PC-9 (cell line): ENCODE measurements at regions of chr11 and their contacts with region 1.

Region 1: DNA sequence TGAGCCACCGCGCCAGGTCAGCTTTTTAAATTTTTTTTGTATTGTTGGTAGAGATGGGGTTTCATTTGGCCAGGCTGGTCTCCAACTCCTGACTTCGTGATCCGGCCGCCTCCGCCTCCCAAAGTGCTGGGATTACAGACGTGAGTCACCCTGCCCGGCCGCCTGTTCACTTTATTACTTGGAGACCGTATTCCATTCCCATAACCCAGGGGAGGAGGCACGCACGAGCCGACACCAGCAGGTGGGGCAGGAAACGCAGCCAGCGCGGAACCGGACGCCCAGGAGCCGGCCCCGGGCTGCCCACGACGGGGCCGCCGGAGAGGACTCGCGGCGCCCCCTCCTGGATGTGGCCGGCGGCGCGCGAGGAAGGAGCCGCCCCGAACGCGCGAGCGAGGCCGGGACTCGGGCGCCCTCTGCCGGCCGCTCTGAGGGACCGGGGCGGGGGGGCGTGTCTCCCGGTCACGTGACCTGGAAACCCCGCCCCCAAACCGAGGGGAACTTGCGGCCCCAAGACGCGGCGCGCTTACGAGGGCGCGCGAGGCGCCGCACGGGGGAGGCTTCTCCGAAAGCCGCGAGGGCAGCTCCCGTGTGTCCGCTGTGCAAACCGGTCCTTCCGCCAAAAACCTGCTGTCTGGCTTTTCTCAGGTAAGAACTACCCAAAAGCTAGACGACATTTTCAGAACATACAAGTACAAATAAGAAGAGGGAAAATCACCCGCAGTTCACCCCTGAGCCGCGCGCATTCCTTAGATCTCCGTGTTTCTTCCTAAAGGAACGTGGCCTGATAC is 11.6 kb upstream of the RNH1 start:
- DNase-seq: peak; percentile 88 to 92
- H3K4me3 ChIP-seq: peak overlapping the region; percentile 32; the same call in 1 of the 2 replicates
- H3K27ac ChIP-seq: peak overlapping the region; percentile 71
- H3K4me1 ChIP-seq: no peaks in the 10 kb centered on the region
- H3K27me3 ChIP-seq: no peaks in the 10 kb centered on the region
- CTCF ChIP-seq: peak; percentile 73

Region 2: GRCh38 chr11:394034-394857 is 124.4 kb before region 1 on chr11 and contains the start of gene PKP3:
- CTCF ChIA-PET with region 1: no interaction called
- POLR2A ChIA-PET with region 1: no interaction called
- intact Hi-C with region 1: loop called (anchors 5 kb)
- DNase-seq: peak; percentile 83 to 91
- H3K4me3 ChIP-seq: peak within 1 kb of the TSS; percentile 89
- H3K27ac ChIP-seq: peak within 1 kb of the TSS; percentile 92
- H3K4me1 ChIP-seq: peaks cover 10% of the 10 kb centered on the region
- H3K27me3 ChIP-seq: no peaks in the 10 kb centered on the region
- CTCF ChIP-seq: no peak
- total RNA-seq, gene PKP3: 83.7 and 109 TPM in 2 replicates

Region 3: DNA sequence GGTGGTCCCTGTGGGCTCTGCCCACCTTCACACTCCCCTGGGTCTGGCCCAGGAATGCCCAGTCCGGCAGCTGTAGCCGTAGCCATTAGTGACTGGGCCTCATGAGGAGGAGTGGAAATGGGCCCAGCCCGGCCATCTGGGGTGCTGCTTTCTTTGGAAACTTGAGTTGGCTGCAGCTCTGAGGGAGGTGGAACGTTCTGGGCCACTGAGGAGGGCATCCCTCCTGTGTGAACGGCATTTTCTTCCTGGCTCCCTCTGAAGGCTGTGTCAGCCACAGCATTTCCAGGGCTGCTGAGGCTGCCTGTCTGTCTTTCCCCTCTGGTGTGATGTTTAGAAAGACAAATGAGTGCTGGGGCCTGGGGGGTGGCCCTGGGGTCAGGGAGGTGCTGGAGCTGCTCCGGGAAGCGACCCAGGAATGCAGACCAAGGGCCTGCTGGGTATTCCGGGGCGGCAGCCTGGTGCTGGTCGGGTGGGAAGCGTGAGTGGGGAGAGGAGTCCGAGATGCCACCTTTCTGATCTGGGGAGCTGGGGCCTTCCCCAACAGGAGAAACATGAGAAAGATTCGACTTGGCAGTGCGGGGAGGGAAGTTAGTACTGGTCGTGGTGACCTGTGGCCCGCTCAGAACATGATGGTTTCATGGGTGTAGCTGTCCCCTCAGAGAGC is 41.5 kb before region 1 on chr11:
- CTCF ChIA-PET with region 1: no interaction called
- POLR2A ChIA-PET with region 1: no interaction called
- intact Hi-C with region 1: no loop called
- DNase-seq: no peak
- H3K4me3 ChIP-seq: no peak overlapping the region
- H3K27ac ChIP-seq: no peak overlapping the region
- H3K4me1 ChIP-seq: no peaks in the 10 kb centered on the region
- H3K27me3 ChIP-seq: no peaks in the 10 kb centered on the region
- CTCF ChIP-seq: no peak